Mammary epithelial cell (primary cell): ENCODE measurements at regions of chr1 and their contacts with region 1.

Region 1: DNA sequence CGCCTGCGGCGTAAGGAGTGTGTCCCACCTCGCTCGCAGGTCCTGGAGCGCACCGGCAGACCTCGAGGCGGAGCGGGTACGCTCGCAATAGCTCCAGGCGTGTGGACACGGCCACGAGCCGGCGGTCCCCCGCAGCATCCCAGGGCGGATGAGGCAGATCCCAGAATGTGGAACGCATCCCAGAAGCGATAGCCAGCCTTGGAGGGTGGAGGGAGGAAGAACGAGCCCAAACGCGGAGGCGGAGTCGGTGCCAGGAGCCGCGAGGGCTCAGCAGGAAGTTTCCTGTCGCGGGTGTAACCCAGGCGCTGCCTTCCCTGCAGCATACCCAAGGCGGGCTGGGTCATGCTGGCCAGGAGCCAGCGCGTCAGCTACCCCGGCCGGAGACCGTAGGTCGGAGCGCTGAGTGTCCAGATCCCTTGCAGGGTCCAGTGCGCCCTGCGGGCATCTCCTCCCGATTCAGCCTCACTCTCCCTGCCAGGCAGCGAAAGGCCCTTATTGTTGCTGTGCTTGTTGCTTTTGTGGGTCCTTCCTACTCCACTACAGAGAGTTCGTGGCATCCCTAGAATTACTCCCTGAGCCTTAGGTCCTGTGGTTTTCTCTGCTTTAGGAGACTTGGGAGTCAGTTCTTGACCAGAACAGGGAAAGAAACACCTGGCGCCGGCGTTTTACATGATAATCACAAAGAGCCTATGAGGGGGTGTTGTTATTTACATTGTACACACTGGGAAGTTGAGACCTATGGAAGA is 27.7 kb downstream of the STYXL2 start:
- DNase-seq: peak; percentile 32
- H3K4me3 ChIP-seq: peak overlapping the region in 2 of 3 experiments; percentile 28 to 41
- H3K27ac ChIP-seq: no peak overlapping the region
- H3K4me1 ChIP-seq: peaks cover 6% of the 10 kb centered on the region
- H3K27me3 ChIP-seq: no peaks in the 10 kb centered on the region
- CTCF ChIP-seq: no peak

Region 2: DNA sequence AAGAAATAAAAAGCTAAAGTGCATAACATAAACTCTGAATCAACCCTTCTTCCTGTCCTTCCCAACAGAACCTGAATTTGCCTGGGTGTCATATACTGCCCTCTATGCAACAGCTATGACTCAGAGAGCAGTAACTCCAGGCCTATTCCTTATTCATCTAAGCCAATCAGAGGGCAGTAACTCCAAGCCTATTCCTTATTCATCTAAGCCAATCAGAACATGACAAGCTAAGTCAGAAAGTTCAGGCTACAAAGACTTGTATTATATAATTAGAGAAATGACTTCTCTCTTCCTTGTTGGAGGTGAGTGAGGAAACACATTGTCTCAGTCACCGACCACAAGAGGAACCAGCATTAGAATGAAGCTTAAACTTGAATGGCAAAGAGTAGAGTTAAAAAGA is 219.3 kb before region 1 on chr1:
- CTCF ChIA-PET with region 1: no interaction called
- dilution Hi-C with region 1: no loop called
- in situ Hi-C with region 1: no loop called
- intact Hi-C with region 1: loop called (anchors 10 kb)
- DNase-seq: peak; percentile 84
- H3K4me3 ChIP-seq: no peak overlapping the region
- H3K27ac ChIP-seq: no peak overlapping the region
- H3K4me1 ChIP-seq: peaks cover 8% of the 10 kb centered on the region
- H3K27me3 ChIP-seq: no peaks in the 10 kb centered on the region
- CTCF ChIP-seq: peak in 1 of 2 donors; percentile 6